ENCODE measurements at regions of chr11 and their contacts with region 1.

Region 1: GRCh38 chr11:27392278-27393114 is 29.5 kb upstream of the CCDC34 start:
- DNase-seq: no peak
- H3K4me3 Mint-ChIP-seq: no peak overlapping the region
- H3K27ac Mint-ChIP-seq: peak overlapping the region; percentile 59
- H3K4me1 Mint-ChIP-seq: peaks cover 80% of the 10 kb centered on the region
- H3K27me3 Mint-ChIP-seq: no peaks in the 10 kb centered on the region
- CTCF ChIP-seq: no peak

Region 2: DNA sequence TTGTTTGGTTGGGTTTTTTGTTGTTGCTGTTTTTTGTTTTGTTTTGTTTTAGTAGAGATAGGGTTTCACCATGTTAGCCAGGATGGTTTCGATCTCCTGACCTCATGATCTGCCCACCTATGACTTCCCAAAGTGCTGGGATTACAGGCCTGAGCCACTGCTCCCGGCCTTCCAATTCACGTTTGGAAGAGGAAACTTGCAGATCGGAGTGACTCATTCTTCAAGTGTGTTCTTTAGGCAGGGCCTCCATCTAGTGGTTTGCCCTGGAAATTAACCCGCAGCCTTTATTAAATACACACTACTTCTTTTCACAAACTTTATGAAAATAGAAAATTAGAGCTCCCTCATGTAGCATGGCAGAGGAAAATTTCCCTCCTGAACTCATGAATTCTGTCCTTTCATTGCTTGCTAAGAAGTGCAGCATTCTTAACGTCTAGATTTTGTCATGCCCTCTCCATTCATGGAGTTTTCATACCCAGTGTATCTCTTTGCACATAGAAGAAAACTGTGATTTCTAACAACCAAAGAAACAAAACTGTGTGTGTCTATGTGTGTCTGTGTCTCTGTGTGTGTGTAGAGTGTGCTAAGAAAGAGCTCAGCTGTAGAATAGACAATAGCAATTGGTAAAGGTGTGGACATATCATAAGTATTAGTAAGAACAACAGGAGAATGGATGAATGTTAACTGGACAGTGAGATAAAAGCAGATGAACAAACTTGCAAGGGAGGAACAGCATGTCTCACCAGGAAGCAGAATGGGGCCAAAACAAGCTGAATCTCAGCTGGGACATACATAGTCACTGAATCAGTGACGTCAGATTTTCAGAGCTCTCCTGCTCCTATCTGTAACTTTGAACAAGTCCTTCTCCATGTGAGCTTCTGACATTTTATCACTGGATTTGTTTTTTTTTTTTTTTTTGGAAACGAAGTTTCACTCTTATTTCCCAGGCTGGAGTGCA is 233.5 kb before region 1 on chr11:
- CTCF ChIA-PET with region 1: no interaction called
- intact Hi-C with region 1: no loop called
- DNase-seq: peak; percentile 53
- H3K4me3 Mint-ChIP-seq: no peak overlapping the region
- H3K27ac Mint-ChIP-seq: no peak overlapping the region
- H3K4me1 Mint-ChIP-seq: peaks cover 8% of the 10 kb centered on the region
- H3K27me3 Mint-ChIP-seq: peaks cover 23% of the 10 kb centered on the region
- CTCF ChIP-seq: peak; percentile 71

Region 3: DNA sequence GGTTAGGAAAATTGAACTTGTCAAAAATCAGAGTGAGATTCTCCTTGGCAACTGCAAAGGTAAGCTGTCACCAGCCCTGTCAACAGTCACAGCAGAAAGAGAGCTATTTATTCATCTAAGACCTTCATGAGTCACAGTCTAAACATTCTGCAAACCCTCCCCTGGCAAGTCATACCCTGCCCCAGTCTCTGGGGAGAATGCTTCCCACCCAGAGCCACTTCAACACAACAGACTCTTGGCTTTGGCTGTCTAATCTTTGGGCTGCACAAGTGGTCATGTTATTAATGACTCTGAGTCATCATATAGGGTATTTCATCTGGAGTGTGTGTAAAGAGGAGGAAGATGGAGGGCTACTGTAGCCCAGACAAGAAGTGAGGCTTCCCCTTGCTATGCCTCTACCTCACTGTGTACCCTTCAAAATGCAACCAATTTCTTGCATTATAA is 182.9 kb before region 1 on chr11:
- CTCF ChIA-PET with region 1: no interaction called
- intact Hi-C with region 1: loop called (anchors 5 kb)
- DNase-seq: peak; percentile 81
- H3K4me3 Mint-ChIP-seq: no peak overlapping the region
- H3K27ac Mint-ChIP-seq: peak overlapping the region; percentile 89
- H3K4me1 Mint-ChIP-seq: peaks cover 73% of the 10 kb centered on the region
- H3K27me3 Mint-ChIP-seq: no peaks in the 10 kb centered on the region
- CTCF ChIP-seq: no peak

Region 4: DNA sequence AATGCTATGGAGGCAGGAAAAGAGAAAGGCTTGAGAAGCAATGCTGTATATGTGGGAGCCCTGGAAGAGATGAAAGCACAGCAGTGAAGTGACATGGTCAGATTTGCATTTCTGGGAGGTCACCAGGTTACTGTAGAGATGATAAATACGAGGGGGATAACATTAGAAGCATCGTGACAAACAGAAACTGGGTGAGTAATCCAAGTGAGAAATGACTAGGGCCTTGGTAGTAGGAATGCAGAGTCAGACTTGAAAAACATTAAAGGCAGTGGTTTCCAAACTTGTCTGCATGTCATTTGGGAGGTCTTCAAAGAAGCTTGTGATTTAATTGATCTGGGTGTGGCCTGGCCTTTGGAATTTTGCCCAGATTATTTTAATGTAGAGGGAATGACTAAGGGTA is 73.4 kb before region 1 on chr11:
- CTCF ChIA-PET with region 1: no interaction called
- intact Hi-C with region 1: loop called (anchors 2 kb)
- DNase-seq: peak; percentile 13
- H3K4me3 Mint-ChIP-seq: peak overlapping the region; percentile 40
- H3K27ac Mint-ChIP-seq: peak overlapping the region; percentile 74
- H3K4me1 Mint-ChIP-seq: peaks cover 40% of the 10 kb centered on the region
- H3K27me3 Mint-ChIP-seq: no peaks in the 10 kb centered on the region
- CTCF ChIP-seq: no peak

Region 5: DNA sequence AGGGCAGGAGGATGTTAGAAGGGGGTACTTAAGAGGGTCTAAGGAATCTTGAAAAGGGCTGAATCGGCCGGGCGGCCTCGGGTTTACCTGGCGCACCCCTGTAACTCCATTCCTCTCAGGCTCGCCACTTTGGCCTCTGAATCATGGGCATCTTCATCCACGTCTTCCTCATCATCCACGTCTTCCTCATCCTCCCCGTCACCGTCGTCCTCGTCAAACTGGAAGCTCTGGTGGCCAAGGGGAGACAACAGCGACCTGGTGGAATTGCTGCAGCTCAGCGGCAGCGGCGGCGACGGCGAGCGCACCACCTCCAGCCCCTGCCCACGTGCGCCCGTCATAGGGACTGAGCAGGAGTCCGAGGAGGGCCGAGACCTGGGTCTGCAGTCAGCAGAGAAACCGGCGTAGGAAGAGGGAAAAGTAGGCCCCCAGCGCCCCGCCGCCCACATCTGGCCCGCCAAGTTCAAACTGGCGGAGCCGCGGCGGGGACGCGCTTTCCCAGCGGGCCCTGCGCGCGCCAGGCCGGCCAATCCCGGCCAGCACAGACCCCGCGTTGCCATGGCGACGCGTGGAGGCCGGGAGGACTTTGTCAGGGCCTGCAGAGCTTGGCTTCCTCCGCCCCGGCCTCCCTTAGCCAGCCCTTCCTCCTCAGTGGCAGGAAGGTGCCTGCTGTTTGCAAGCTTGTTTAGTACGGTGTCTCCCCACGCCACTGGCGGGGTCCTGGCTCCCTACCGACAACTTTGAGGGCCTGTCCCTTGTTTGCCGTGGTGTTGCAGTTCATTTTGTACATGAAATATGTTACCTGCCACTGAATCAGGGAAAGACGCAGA is 29.5 kb before region 1 on chr11 and contains the start of gene CCDC34:
- CTCF ChIA-PET with region 1: no interaction called
- intact Hi-C with region 1: loop called (anchors 2 kb)
- DNase-seq: peak; percentile 92
- H3K4me3 Mint-ChIP-seq: peak within 1 kb of the TSS; percentile 97
- H3K27ac Mint-ChIP-seq: peak within 1 kb of the TSS; percentile 82
- H3K4me1 Mint-ChIP-seq: peaks cover 41% of the 10 kb centered on the region
- H3K27me3 Mint-ChIP-seq: no peaks in the 10 kb centered on the region
- CTCF ChIP-seq: no peak
- total RNA-seq, gene CCDC34: 17.6 and 21.6 TPM in 2 replicates

Region 6: GRCh38 chr11:27416193-27417187 is 24.0 kb after region 1 on chr11:
- CTCF ChIA-PET with region 1: interaction called, 4 read pairs
- intact Hi-C with region 1: loop called (anchors 2 kb)
- DNase-seq: no peak
- H3K4me3 Mint-ChIP-seq: no peak overlapping the region
- H3K27ac Mint-ChIP-seq: no peak overlapping the region
- H3K4me1 Mint-ChIP-seq: peaks cover 34% of the 10 kb centered on the region
- H3K27me3 Mint-ChIP-seq: no peaks in the 10 kb centered on the region
- CTCF ChIP-seq: no peak

Measured in Calu3 (cell line).